ENCODE measurements at regions of chr9 and their contacts with region 1.

Region 1: DNA sequence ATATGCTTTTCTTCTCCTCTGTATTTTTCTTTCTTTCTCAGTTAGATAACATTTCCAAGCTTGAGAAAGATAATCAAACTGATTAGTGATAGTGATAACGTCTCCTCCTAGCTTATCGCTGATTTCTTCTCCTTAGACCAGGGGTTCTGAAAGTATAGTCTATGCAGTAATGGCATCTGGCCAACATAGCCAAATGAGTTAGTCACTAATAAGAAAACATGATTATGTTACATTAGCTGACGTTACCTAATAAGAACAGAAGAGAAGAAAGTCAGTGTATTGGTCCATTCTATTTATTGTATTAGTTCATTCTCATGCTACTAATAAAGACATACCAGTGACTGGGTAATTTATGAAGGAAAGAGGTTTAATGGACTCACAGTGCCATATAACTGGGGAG is 111.2 kb downstream of the STRBP start:
- DNase-seq: no peak
- H3K4me3 ChIP-seq: no peak overlapping the region
- H3K27ac ChIP-seq: no peak overlapping the region
- H3K4me1 ChIP-seq: no peaks in the 10 kb centered on the region
- H3K27me3 ChIP-seq: no peaks in the 10 kb centered on the region
- CTCF ChIP-seq: no peak

Region 2: DNA sequence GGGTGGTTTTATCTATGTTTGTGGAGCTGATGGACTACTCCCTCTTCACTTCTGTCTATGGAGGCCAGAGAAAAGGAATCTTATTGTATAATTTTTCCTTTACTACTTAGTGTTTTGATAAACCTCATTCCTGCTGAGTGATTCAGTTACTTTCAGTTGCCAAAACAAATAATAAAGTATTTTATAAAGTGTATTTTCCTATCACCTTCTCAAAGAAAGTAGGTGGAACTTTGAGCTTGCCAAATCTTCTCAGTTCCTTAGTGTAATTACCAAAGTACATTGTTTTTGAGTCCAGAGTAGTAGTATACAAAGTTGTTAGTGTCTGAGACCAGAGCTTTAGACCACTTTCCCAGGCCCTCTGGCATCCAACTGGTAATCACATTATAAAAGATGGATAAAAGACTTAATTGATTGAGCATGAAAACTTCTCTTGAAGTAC is 202.9 kb before region 1 on chr9:
- CTCF ChIA-PET with region 1: no interaction called
- POLR2A ChIA-PET with region 1: interaction called, 11 read pairs
- intact Hi-C with region 1: no loop called
- DNase-seq: peak in 1 of 2 experiments; percentile 85
- H3K4me3 ChIP-seq: no peak overlapping the region
- H3K27ac ChIP-seq: peak overlapping the region; percentile 57
- H3K4me1 ChIP-seq: peaks cover 26% of the 10 kb centered on the region
- H3K27me3 ChIP-seq: no peaks in the 10 kb centered on the region
- CTCF ChIP-seq: no peak

Measured in PC-9 (cell line).